CD8-positive, alpha-beta T cell (primary cell): ENCODE measurements at regions of chr4 and their contacts with region 1.

Region 1: DNA sequence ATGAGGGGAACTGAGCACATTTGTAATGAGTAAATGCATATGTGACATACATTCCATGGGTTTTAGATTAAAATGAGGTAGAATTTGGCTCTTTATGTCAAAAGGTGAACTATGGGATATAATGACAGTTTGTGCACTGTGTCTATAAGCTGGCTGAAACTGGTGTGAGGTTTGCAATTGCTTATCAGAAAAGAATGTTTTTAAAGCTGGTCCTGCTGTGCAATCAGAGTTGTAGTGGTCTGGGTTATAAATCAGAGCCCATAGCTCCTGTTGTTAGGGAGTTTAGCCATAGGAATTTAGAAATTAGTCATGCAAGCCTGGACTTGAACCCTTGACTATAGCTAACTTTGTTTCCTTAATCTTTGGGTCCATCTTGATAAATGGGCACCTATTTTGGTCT is 23.1 kb upstream of the GATB start:
- DNase-seq: no peak
- ATAC-seq: no peak
- H3K4me3 ChIP-seq: no peak overlapping the region
- H3K4me3 Mint-ChIP-seq: no peak overlapping the region
- H3K27ac ChIP-seq: no peak overlapping the region
- H3K27ac Mint-ChIP-seq: no peak overlapping the region
- H3K4me1 ChIP-seq: no peaks in the 10 kb centered on the region
- H3K4me1 Mint-ChIP-seq: peaks cover 6% of the 10 kb centered on the region
- H3K27me3 ChIP-seq: no peaks in the 10 kb centered on the region
- H3K27me3 Mint-ChIP-seq: no peaks in the 10 kb centered on the region
- CTCF ChIP-seq: no peak

Region 2: GRCh38 chr4:151573945-151574344 is 209.9 kb before region 1 on chr4:
- CTCF ChIA-PET with region 1: no interaction called
- POLR2A ChIA-PET with region 1: no interaction called
- intact Hi-C with region 1: no loop called
- DNase-seq: no peak
- ATAC-seq: no peak
- H3K4me3 ChIP-seq: no peak overlapping the region
- H3K4me3 Mint-ChIP-seq: no peak overlapping the region
- H3K27ac ChIP-seq: no peak overlapping the region
- H3K27ac Mint-ChIP-seq: no peak overlapping the region
- H3K4me1 ChIP-seq: no peaks in the 10 kb centered on the region
- H3K4me1 Mint-ChIP-seq: no peaks in the 10 kb centered on the region
- H3K27me3 ChIP-seq: no peaks in the 10 kb centered on the region
- H3K27me3 Mint-ChIP-seq: peaks cover 10% of the 10 kb centered on the region
- CTCF ChIP-seq: no peak

Region 3: GRCh38 chr4:151801547-151802516 is 18.0 kb after region 1 on chr4:
- CTCF ChIA-PET with region 1: interaction called, 11 read pairs
- POLR2A ChIA-PET with region 1: no interaction called
- intact Hi-C with region 1: no loop called
- DNase-seq: peak; percentile 25 to 70 (median 61)
- ATAC-seq: peak; percentile 87
- H3K4me3 ChIP-seq: no peak overlapping the region
- H3K4me3 Mint-ChIP-seq: no peak overlapping the region
- H3K27ac ChIP-seq: no peak overlapping the region
- H3K27ac Mint-ChIP-seq: no peak overlapping the region
- H3K4me1 ChIP-seq: no peaks in the 10 kb centered on the region
- H3K4me1 Mint-ChIP-seq: no peaks in the 10 kb centered on the region
- H3K27me3 ChIP-seq: no peaks in the 10 kb centered on the region
- H3K27me3 Mint-ChIP-seq: no peaks in the 10 kb centered on the region
- CTCF ChIP-seq: peak; percentile 95

Region 4: GRCh38 chr4:152304220-152304619 is 520.4 kb after region 1 on chr4:
- CTCF ChIA-PET with region 1: no interaction called
- POLR2A ChIA-PET with region 1: no interaction called
- intact Hi-C with region 1: no loop called
- DNase-seq: no peak
- ATAC-seq: no peak
- H3K4me3 ChIP-seq: no peak overlapping the region
- H3K4me3 Mint-ChIP-seq: no peak overlapping the region
- H3K27ac ChIP-seq: no peak overlapping the region
- H3K27ac Mint-ChIP-seq: no peak overlapping the region
- H3K4me1 ChIP-seq: no peaks in the 10 kb centered on the region
- H3K4me1 Mint-ChIP-seq: no peaks in the 10 kb centered on the region
- H3K27me3 ChIP-seq: no peaks in the 10 kb centered on the region
- H3K27me3 Mint-ChIP-seq: no peaks in the 10 kb centered on the region
- CTCF ChIP-seq: no peak

Region 5: GRCh38 chr4:153296040-153296823 is 1512.4 kb after region 1 on chr4:
- CTCF ChIA-PET with region 1: no interaction called
- POLR2A ChIA-PET with region 1: no interaction called
- intact Hi-C with region 1: no loop called
- DNase-seq: no peak
- ATAC-seq: no peak
- H3K4me3 ChIP-seq: no peak overlapping the region
- H3K4me3 Mint-ChIP-seq: no peak overlapping the region
- H3K27ac ChIP-seq: no peak overlapping the region
- H3K27ac Mint-ChIP-seq: no peak overlapping the region
- H3K4me1 ChIP-seq: no peaks in the 10 kb centered on the region
- H3K4me1 Mint-ChIP-seq: no peaks in the 10 kb centered on the region
- H3K27me3 ChIP-seq: no peaks in the 10 kb centered on the region
- H3K27me3 Mint-ChIP-seq: peaks cover 3% of the 10 kb centered on the region
- CTCF ChIP-seq: no peak